Kidney (tissue), 22 donors: ENCODE measurements at regions of chr10 and their contacts with region 1.

Region 1: DNA sequence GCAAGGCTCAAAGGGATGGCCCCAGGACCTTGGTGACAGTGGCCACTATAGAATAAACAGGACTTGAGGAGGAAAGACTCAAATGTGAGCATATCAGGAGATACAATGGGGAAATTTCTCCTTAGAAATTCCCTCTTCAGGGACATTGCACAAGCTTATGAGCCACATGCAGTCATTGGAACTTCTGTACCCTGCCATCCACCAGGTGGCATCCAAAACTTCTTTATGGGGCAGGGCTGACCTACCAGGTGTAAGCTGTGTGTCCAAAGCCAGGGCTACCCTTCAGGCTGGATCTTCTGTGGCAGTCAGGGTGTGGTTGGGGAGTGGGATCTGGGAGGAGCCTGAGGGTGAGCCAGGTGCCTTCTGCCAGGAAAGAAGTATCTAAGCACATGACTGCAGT is 36.6 kb upstream of the LRRC18 start:
- DNase-seq: peak in 3 of 5 donors; percentile 17 to 52 (median 29)
- H3K4me3 ChIP-seq: no peak overlapping the region
- H3K27ac ChIP-seq: no peak overlapping the region
- H3K4me1 ChIP-seq: no peaks in the 10 kb centered on the region
- H3K27me3 ChIP-seq: peaks cover 2% of the 10 kb centered on the region
- CTCF ChIP-seq: peak; percentile 36

Region 2: DNA sequence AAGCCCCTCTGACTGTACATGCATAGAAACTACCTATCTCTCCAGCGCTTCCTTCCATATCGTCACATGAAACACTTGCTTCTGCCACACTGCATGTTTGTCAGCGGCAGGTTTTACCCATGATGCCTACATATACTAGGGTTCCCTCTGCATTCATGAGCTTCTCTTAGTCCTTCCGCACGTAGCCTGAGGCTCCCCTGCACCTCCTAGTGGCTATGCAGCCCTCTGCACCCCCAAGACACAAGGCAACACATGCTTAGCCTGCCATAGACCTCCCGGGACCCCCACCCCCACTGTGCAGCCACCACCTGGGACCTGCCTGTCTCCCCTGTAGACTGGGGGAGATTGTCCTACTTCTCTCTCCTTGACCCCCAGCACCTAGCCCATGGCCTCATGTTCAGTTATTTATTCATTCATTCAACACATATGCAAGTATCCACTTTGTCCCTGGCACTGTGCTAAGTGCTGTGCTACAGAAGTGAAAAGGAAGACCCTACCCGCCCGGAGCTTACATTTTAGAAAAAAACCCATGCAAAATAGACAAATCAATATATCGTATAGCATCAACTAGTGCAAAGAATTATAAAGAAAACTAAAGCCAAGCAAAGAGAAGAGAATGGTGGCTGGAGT is 188.5 kb after region 1 on chr10:
- intact Hi-C with region 1: loop called (anchors 10 kb)
- DNase-seq: peak in 3 of 5 donors; percentile 30 to 48 (median 37)
- H3K4me3 ChIP-seq: no peak overlapping the region
- H3K27ac ChIP-seq: no peak overlapping the region
- H3K4me1 ChIP-seq: no peaks in the 10 kb centered on the region
- H3K27me3 ChIP-seq: no peaks in the 10 kb centered on the region
- CTCF ChIP-seq: peak; percentile 59

Region 3: GRCh38 chr10:49177391-49178355 is 201.5 kb after region 1 on chr10:
- intact Hi-C with region 1: no loop called
- DNase-seq: no peak
- H3K4me3 ChIP-seq: no peak overlapping the region
- H3K27ac ChIP-seq: peak overlapping the region in 1 of 2 donors; percentile 16
- H3K4me1 ChIP-seq: peaks cover 0 to 7% (median 4%) of the 10 kb centered on the region in 3 donors
- H3K27me3 ChIP-seq: no peaks in the 10 kb centered on the region
- CTCF ChIP-seq: no peak

Region 4: DNA sequence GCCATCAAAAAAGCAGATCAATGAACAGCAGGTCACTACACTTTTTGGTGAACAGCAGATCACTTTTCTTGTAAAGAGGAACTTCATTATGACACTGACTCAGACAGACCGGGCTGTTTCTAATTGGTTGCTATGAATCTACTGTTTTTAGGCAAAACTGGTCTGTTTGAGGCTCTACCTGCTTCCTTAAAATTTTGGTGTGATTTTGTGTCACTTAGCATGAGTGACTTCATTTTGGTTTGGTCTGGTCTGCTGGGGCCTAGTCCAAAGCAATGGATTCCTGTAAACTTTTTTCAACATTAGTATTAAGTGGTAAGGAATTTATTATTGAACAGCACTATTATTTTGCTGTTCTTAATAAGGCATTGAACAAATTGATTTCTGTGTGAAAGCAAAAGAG is 281.0 kb after region 1 on chr10:
- intact Hi-C with region 1: no loop called
- DNase-seq: no peak
- H3K4me3 ChIP-seq: no peak overlapping the region
- H3K27ac ChIP-seq: no peak overlapping the region
- H3K4me1 ChIP-seq: peaks cover 0 to 2% (median 0%) of the 10 kb centered on the region in 3 donors
- H3K27me3 ChIP-seq: no peaks in the 10 kb centered on the region
- CTCF ChIP-seq: no peak